Activated CD8-positive, alpha-beta T cell treated with anti-CD3 and anti-CD28 coated beads for 36 hours (primary cell): ENCODE measurements at regions of chr11 and their contacts with region 1.

Region 1: DNA sequence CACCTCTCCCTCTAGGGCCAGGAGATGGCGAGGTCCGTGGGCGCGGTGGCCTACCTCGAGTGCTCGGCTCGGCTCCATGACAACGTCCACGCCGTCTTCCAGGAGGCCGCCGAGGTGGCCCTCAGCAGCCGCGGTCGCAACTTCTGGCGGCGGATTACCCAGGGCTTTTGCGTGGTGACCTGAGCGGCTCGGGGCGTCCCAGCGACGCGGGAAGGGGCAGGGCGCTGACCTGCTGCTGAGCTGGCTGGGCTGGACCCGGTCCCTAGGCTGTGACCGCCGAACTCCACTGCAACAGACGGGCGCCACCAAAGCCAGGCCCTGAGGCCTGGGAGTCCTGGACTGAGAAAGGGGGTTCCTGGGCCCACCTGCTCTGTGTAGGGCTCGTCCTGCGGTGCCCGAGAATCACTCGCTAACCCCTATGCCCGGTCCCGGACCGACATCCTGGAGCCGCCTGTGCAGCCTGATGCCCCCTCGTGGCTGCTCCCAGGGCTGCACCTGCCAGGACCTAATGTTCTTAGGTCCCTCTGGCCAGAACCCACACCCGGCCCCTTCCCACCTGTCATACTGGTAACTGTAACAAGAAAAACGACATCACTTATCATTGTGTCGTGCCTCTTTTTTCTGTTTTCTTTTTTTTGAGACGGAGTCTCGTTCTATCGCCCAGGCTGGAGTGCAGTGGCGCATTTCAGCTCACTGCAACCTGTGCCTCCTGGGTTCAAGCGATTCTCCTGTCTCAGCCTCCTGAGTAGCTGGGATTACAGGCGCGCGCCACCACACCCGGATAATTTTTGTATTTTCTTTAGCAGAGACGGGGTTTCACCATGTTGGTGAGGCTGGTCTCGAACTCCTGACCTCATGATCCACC is 15.0 kb downstream of the RHOD start:
- DNase-seq: peak; percentile 91
- ATAC-seq: peak; percentile 99
- H3K4me3 Mint-ChIP-seq: peak overlapping the region; percentile 31
- H3K27ac Mint-ChIP-seq: no peak overlapping the region
- H3K4me1 Mint-ChIP-seq: no peaks in the 10 kb centered on the region
- H3K27me3 Mint-ChIP-seq: no peaks in the 10 kb centered on the region
- CTCF ChIP-seq: peak; percentile 94

Region 2: GRCh38 chr11:67032830-67033555 is 38.7 kb before region 1 on chr11:
- CTCF ChIA-PET with region 1: no interaction called
- POLR2A ChIA-PET with region 1: no interaction called
- intact Hi-C with region 1: no loop called
- DNase-seq: no peak
- ATAC-seq: no peak
- H3K4me3 Mint-ChIP-seq: no peak overlapping the region
- H3K27ac Mint-ChIP-seq: no peak overlapping the region
- H3K4me1 Mint-ChIP-seq: no peaks in the 10 kb centered on the region
- H3K27me3 Mint-ChIP-seq: peaks cover 32% of the 10 kb centered on the region
- CTCF ChIP-seq: no peak

Region 3: DNA sequence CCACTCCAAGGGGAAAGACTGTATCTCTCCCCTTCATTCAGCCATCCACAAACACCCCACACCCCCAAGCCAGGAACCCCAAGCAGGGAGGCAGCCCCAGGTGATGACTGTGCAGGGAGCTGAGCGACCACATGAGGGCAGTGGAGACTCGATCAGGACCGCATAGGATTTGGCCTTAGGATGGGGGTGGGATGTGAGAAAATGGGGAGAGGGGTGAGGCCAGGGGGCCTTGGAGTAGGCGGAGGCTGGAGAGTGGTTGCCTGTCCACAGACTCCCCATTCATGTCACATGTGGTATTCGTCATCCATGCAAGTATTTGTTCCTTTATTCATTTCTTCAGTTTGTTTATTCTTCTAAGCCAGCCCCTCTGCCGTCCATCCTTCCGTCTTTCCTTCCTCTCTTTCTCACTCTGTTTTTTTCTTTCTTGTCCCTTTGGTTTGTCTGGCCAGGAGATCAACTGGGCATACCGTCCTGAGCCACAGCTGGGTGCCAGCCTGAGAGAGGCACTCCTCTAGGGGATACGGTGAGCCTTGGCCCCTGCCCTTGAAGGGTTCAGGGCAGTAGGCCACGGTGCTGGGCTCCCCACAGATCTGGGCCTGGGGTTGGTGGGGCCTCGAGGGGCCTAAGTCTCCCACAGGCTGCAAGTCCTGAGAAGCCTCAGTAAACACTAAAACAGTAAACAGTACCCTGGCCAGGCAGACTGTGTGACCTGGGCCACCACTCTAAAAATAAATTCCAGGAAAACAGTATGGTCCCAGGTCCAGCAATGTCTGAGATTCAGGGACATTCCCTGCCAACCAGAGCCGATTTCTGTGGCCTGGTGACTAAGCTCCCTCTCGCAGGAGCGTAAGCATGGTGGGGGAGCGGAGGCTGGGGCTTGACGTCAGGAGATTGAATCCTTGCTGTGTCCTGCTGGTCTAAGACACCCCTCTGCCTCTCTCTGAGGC is 17.5 kb before region 1 on chr11:
- CTCF ChIA-PET with region 1: interaction called, 67 read pairs
- POLR2A ChIA-PET with region 1: no interaction called
- intact Hi-C with region 1: no loop called
- DNase-seq: peak; percentile 71
- ATAC-seq: peak; percentile 77
- H3K4me3 Mint-ChIP-seq: no peak overlapping the region
- H3K27ac Mint-ChIP-seq: no peak overlapping the region
- H3K4me1 Mint-ChIP-seq: peaks cover 15% of the 10 kb centered on the region
- H3K27me3 Mint-ChIP-seq: peaks cover 10% of the 10 kb centered on the region
- CTCF ChIP-seq: peak; percentile 68